Activated CD8-positive, alpha-beta T cell treated with anti-CD3 and anti-CD28 coated beads, Interleukin-2, amount 10 ng/mL, durations not matched to agents 7 days and 5 days (primary cell): ENCODE measurements at regions of chr20 and their contacts with region 1.

Region 1: DNA sequence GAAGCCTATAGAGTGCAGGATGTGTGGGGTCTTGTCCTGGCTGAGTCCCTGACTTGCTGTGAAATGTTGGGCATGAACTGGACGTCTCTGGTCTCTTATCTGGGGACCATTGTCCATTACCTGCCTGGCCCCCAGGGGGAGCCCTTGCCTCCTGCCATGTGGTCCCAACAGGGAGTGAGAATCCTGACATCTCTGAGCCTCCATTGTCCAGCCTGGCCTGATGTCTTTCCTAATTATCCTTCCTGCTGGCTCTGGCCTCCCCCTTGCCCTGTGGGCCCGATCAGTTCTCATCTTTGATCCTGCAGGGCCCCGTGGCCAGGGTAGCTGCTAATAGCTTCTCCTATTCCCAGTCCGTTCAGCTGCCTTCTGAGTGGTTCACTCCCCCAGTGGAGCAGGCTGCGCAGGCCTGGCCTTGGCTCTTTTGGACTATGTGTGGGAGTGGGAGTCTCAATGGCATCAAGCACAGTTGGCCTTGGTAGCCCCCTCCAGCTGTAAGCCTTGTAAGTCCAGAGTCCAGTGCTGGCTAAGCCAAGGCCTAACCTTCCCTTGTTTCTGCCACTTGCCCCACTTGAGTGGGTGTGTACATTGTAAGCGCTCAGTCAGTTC is 77.9 kb upstream of the RALY start:
- DNase-seq: peak; percentile 61
- ATAC-seq: peak; percentile 71
- H3K4me3 Mint-ChIP-seq: no peak overlapping the region
- H3K27ac Mint-ChIP-seq: no peak overlapping the region
- H3K4me1 Mint-ChIP-seq: peaks cover 22% of the 10 kb centered on the region
- H3K27me3 Mint-ChIP-seq: peaks cover 14% of the 10 kb centered on the region

Region 2: DNA sequence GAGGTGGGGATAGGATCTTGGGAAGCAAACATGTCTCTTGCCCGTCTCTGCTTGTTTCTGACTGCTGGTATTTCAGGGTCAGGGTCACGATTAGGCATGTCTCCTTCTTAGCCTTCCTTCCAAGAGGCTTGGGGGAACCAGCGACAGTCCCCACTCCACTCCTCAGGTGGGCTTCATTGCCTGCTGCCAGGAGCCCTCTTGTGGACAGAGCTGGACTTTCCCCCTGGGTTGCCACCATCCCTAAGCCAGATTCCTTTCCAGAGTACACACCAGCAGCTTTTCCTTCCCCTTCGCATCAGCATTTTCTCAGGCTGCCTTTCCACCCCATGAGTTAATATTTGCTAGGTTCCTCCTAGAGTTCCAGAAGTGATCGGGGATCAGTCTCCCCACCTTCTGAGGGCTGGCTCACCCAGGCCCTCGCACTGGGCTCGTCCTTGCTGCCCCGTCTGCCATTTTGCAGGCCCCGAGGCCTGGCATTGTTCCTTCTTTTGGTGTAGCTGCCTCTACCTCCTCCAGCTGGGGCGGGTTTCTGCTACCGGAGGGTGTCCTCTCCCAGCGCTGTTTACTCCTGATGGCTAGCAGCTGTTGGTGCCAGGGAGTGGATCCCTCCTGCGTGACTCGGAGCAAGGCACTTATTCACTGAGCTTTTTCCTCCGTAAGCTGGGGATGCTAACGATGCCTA is 262.5 kb before region 1 on chr20:
- CTCF ChIA-PET with region 1: no interaction called
- POLR2A ChIA-PET with region 1: no interaction called
- DNase-seq: peak; percentile 58
- ATAC-seq: peak; percentile 63
- H3K4me3 Mint-ChIP-seq: no peak overlapping the region
- H3K27ac Mint-ChIP-seq: peak overlapping the region; percentile 1
- H3K4me1 Mint-ChIP-seq: peaks cover 4% of the 10 kb centered on the region
- H3K27me3 Mint-ChIP-seq: no peaks in the 10 kb centered on the region

Region 3: DNA sequence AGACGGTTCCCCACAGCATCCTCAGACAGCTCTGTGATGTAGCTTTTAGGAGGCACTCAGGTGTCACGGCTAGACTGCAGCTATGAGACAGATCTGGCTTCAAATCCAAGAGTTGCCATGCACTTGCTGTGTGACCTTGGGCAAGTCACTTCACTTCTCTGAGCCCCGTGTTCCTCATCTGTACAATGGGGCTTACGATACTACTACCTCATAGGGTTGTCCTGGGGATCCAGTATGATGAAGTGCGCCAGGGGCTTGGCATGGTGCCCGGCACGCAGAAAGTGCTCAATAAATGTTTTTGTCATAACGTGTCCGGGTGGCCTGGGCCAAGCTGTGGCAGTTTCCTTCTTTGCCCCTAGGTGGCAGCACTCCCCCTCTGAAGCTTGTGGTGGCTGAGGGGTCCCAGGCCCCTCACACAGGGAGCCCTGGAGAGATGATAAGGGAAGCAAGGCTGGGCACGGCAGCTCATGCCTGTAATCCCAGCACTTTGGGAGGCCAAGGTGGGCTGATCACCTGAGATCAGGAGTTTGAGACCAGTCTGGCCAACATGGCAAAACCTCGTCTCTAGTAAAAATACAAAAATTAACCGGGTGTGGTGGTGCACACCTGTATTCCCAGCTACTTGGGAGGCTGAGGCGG is 123.8 kb before region 1 on chr20:
- CTCF ChIA-PET with region 1: interaction called, 12 read pairs
- POLR2A ChIA-PET with region 1: no interaction called
- DNase-seq: peak; percentile 61
- ATAC-seq: peak; percentile 73
- H3K4me3 Mint-ChIP-seq: no peak overlapping the region
- H3K27ac Mint-ChIP-seq: no peak overlapping the region
- H3K4me1 Mint-ChIP-seq: peaks cover 22% of the 10 kb centered on the region
- H3K27me3 Mint-ChIP-seq: no peaks in the 10 kb centered on the region

Region 4: GRCh38 chr20:33852626-33853506 is 63.0 kb before region 1 on chr20:
- CTCF ChIA-PET with region 1: interaction called, 21 read pairs
- POLR2A ChIA-PET with region 1: no interaction called
- DNase-seq: no peak
- ATAC-seq: peak; percentile 69
- H3K4me3 Mint-ChIP-seq: peak overlapping the region; percentile 49
- H3K27ac Mint-ChIP-seq: peak overlapping the region; percentile 95
- H3K4me1 Mint-ChIP-seq: peaks cover 77% of the 10 kb centered on the region
- H3K27me3 Mint-ChIP-seq: no peaks in the 10 kb centered on the region

Region 5: DNA sequence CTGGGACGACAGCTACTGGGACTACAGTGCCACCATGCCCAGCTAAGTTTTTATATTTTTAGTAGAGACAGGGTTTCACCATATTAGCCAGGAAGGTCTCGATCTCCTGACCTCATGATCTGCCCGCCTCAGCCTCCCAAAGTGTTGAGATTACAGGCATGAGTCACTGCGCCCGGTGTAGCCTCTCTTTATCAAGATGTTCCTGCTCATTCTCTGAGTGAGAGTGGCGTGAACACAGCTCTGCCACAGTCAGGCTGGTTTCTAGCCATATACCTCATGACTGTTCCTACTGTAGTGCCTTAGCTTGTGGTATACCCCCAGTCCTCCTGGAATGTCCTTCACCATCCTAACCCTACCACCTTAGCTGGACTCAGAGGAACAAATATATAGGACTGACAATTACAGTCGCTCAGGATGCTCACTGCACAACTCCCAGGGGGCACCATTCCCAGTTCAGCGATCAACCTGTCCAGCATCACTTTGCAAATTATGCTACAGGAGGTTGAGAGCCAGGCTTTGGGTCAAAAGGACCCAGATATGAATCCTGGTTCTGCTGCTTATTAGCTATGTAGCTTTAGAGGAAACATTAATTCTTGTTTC is 18.4 kb before region 1 on chr20:
- CTCF ChIA-PET with region 1: interaction called, 14 read pairs
- POLR2A ChIA-PET with region 1: no interaction called
- DNase-seq: no peak
- ATAC-seq: no peak
- H3K4me3 Mint-ChIP-seq: no peak overlapping the region
- H3K27ac Mint-ChIP-seq: no peak overlapping the region
- H3K4me1 Mint-ChIP-seq: no peaks in the 10 kb centered on the region
- H3K27me3 Mint-ChIP-seq: peaks cover 24% of the 10 kb centered on the region

Region 6: GRCh38 chr20:34069341-34070078 is 153.7 kb after region 1 on chr20:
- CTCF ChIA-PET with region 1: interaction called, 29 read pairs
- POLR2A ChIA-PET with region 1: no interaction called
- DNase-seq: peak; percentile 67
- ATAC-seq: peak; percentile 78
- H3K4me3 Mint-ChIP-seq: no peak overlapping the region
- H3K27ac Mint-ChIP-seq: no peak overlapping the region
- H3K4me1 Mint-ChIP-seq: peaks cover 19% of the 10 kb centered on the region
- H3K27me3 Mint-ChIP-seq: no peaks in the 10 kb centered on the region